ENCODE measurements at regions of chr5 and their contacts with region 1.

Region 1: DNA sequence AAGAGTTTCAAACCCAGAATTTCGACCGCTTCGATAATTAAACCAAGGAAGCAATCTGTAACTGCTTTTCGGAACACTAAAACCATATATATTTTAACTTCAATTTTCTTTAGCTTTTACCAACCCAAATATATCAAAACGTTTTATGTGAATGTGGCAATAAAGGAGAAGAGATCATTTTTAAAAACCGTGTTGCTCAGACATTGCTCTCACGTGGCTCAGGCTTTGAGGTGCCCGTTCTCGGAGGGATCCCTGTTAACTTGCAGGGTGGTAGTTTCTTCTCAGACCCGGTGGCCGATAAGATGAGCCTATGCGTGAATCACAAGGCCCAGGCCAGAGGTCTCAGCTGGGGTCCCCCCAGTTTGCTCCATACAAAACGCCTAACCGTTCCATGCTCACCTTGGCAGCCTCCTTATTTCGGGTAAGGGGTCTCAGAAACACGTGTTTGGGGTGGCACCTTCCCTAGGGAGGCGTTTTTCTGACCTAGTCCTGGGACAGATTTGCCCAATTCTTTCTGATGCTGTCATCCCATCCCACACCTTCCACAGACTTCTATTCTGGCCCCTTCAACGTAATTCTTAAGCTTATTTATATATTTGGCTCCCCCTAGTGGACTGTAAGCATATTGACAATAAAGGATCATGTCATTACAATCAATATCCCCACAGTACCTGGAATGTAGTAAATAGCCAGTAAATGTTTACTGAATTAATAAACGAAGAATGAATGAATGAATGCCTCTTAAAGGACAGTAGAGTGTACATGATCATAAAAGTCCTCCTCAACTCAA is 48.1 kb downstream of the THBS4 start:
- DNase-seq: peak; percentile 34
- ATAC-seq: peak; percentile 84
- H3K4me3 Mint-ChIP-seq: peak overlapping the region; percentile 51
- H3K27ac Mint-ChIP-seq: peak overlapping the region; percentile 78
- H3K4me1 Mint-ChIP-seq: peaks cover 11% of the 10 kb centered on the region
- H3K27me3 Mint-ChIP-seq: no peaks in the 10 kb centered on the region
- CTCF ChIP-seq: peak; percentile 55

Region 2: DNA sequence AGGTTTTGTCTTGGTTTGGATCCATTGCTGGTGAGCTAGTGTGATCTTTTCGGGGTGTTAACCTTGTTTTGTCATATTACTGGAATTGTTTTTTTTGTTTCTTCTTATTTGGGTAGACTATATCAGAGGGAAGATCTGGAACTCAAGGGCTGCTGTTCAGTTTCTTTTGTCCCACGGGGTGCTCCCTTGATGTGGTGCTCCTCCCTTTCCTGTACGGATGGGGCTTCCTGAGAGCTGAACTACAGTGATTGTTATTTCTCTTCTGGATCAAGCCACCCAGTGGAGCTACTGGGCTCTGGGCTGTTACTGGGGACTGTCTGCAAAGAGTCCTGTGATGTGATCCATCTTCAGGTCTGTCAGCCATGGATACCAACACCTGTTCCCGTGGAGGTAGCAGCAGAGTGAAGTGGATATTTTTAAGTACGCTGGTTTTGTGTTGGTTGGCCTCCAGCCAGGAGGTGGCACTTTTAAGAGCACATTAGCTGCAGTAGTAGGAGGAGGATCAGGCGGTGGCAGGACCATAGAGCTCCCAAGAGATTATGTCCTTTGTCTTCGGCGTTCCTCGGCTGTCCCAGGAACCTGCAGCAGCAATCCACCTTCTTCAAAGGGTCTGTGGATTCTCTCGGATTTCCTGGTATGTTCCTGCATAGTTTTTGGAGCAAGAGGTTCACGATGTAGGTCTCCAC is 1695.7 kb before region 1 on chr5:
- CTCF ChIA-PET with region 1: no interaction called
- POLR2A ChIA-PET with region 1: no interaction called
- intact Hi-C with region 1: no loop called
- DNase-seq: no peak
- ATAC-seq: no peak
- H3K4me3 Mint-ChIP-seq: no peak overlapping the region
- H3K27ac Mint-ChIP-seq: no peak overlapping the region
- H3K4me1 Mint-ChIP-seq: peaks cover 24% of the 10 kb centered on the region
- H3K27me3 Mint-ChIP-seq: no peaks in the 10 kb centered on the region
- CTCF ChIP-seq: no peak

Region 3: GRCh38 chr5:79857714-79858409 is 225.4 kb before region 1 on chr5:
- CTCF ChIA-PET with region 1: interaction called, 14 read pairs
- POLR2A ChIA-PET with region 1: no interaction called
- intact Hi-C with region 1: no loop called
- DNase-seq: peak; percentile 91
- ATAC-seq: peak; percentile 61
- H3K4me3 Mint-ChIP-seq: no peak overlapping the region
- H3K27ac Mint-ChIP-seq: peak overlapping the region; percentile 42
- H3K4me1 Mint-ChIP-seq: peaks cover 14% of the 10 kb centered on the region
- H3K27me3 Mint-ChIP-seq: peaks cover 9% of the 10 kb centered on the region
- CTCF ChIP-seq: peak; percentile 87

Region 4: GRCh38 chr5:79924936-79925893 is 158.1 kb before region 1 on chr5:
- CTCF ChIA-PET with region 1: interaction called, 39 read pairs
- POLR2A ChIA-PET with region 1: no interaction called
- intact Hi-C with region 1: loop called (anchors 1 kb)
- DNase-seq: peak; percentile 51
- ATAC-seq: peak; percentile 61
- H3K4me3 Mint-ChIP-seq: no peak overlapping the region
- H3K27ac Mint-ChIP-seq: no peak overlapping the region
- H3K4me1 Mint-ChIP-seq: no peaks in the 10 kb centered on the region
- H3K27me3 Mint-ChIP-seq: no peaks in the 10 kb centered on the region
- CTCF ChIP-seq: peak; percentile 29

Region 5: GRCh38 chr5:80048084-80048780 is 35.1 kb before region 1 on chr5:
- CTCF ChIA-PET with region 1: interaction called, 14 read pairs
- POLR2A ChIA-PET with region 1: no interaction called
- intact Hi-C with region 1: no loop called
- DNase-seq: no peak
- ATAC-seq: no peak
- H3K4me3 Mint-ChIP-seq: no peak overlapping the region
- H3K27ac Mint-ChIP-seq: no peak overlapping the region
- H3K4me1 Mint-ChIP-seq: no peaks in the 10 kb centered on the region
- H3K27me3 Mint-ChIP-seq: peaks cover 12% of the 10 kb centered on the region
- CTCF ChIP-seq: no peak